GM12878 (cell line): ENCODE measurements at regions of chr12 and their contacts with region 1.

Region 1: GRCh38 chr12:32252199-32253073 is 145.8 kb downstream of the BICD1 start:
- DNase-seq: peak; percentile 76
- ATAC-seq: peak; percentile 98
- H3K4me3 ChIP-seq: peak overlapping the region; percentile 54
- H3K27ac ChIP-seq: peak overlapping the region; percentile 93
- H3K4me1 ChIP-seq: peaks cover 13% of the 10 kb centered on the region
- H3K27me3 ChIP-seq: no peaks in the 10 kb centered on the region
- CTCF ChIP-seq: no peak
- EP300 ChIP-seq: peak; percentile 43 to 57; a peak in 2 of 4 replicates
- POLR2A ChIP-seq: no peak
- RAD21 ChIP-seq: no peak

Region 2: GRCh38 chr12:32106517-32107358 is 145.7 kb before region 1 on chr12 and contains the start of gene BICD1:
- CTCF ChIA-PET with region 1: no interaction called
- POLR2A ChIA-PET with region 1: no interaction called
- RAD21 ChIA-PET with region 1: interaction called, 10 read pairs
- SMC1A ChIA-PET with region 1: interaction called, 4 read pairs
- in situ Hi-C with region 1: no loop called
- intact Hi-C with region 1: no loop called
- DNase-seq: peak; percentile 32
- ATAC-seq: peak; percentile 88
- H3K4me3 ChIP-seq: peak within 1 kb of the TSS; percentile 80
- H3K27ac ChIP-seq: peak within 1 kb of the TSS; percentile 63
- H3K4me1 ChIP-seq: peaks cover 5% of the 10 kb centered on the region
- H3K27me3 ChIP-seq: no peaks in the 10 kb centered on the region
- CTCF ChIP-seq: peak; percentile 2 to 56 (median 21); a peak in 3 of 6 replicates
- EP300 ChIP-seq: no peak
- POLR2A ChIP-seq: peak; percentile 94
- RAD21 ChIP-seq: peak; percentile 44; the same call in 1 of the 2 replicates
- polyA plus RNA-seq, gene BICD1: 4.7 to 5.6 TPM

Region 3: GRCh38 chr12:32264961-32265360 is 12.5 kb after region 1 on chr12:
- CTCF ChIA-PET with region 1: interaction called, 12 read pairs
- POLR2A ChIA-PET with region 1: interaction called, 3 read pairs
- RAD21 ChIA-PET with region 1: interaction called, 5 read pairs
- SMC1A ChIA-PET with region 1: interaction called, 13 read pairs
- in situ Hi-C with region 1: no loop called
- intact Hi-C with region 1: no loop called
- DNase-seq: no peak
- ATAC-seq: peak; percentile 50
- H3K4me3 ChIP-seq: no peak overlapping the region
- H3K27ac ChIP-seq: peak overlapping the region; percentile 64
- H3K4me1 ChIP-seq: peaks cover 11% of the 10 kb centered on the region
- H3K27me3 ChIP-seq: no peaks in the 10 kb centered on the region
- CTCF ChIP-seq: no peak
- EP300 ChIP-seq: no peak
- POLR2A ChIP-seq: no peak
- RAD21 ChIP-seq: no peak

Region 4: DNA sequence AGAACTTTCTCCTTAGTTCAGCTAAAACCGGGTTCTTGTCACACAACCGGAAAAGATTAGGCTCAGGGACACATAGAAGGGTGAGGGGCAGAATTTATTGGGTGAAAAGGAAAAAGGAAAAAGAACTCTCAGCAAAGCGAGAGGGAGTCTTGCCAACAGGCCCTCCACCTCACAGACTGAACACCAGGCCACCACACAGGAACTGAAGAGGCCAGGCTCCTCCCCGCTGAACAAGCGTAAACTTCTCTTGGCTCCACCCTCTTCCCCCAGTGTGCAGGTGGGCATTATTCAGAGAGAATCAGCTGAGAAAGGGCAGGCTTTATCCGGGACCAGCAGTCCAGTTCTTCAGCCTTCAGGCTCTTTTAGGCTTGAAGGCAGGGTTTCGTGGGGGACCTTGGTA is 21.3 kb after region 1 on chr12:
- CTCF ChIA-PET with region 1: interaction called, 6 read pairs
- POLR2A ChIA-PET with region 1: interaction called, 9 read pairs
- RAD21 ChIA-PET with region 1: interaction called, 11 read pairs
- SMC1A ChIA-PET with region 1: interaction called, 15 read pairs
- in situ Hi-C with region 1: no loop called
- intact Hi-C with region 1: loop called (anchors 2 kb)
- DNase-seq: no peak
- ATAC-seq: peak; percentile 95
- H3K4me3 ChIP-seq: peak overlapping the region; percentile 24; the same call in 1 of the 2 replicates
- H3K27ac ChIP-seq: peak overlapping the region; percentile 82
- H3K4me1 ChIP-seq: peaks cover 33% of the 10 kb centered on the region
- H3K27me3 ChIP-seq: no peaks in the 10 kb centered on the region
- CTCF ChIP-seq: no peak
- EP300 ChIP-seq: no peak
- POLR2A ChIP-seq: peak; percentile 87
- RAD21 ChIP-seq: no peak